Aorta (tissue), 5 donors: ENCODE measurements at regions of chr12 and their contacts with region 1.

Region 1: GRCh38 chr12:19643635-19644034 is 204.3 kb downstream of the AEBP2 start:
- DNase-seq: no peak
- ATAC-seq: no peak
- H3K4me3 ChIP-seq: no peak overlapping the region
- H3K27ac ChIP-seq: no peak overlapping the region
- H3K4me1 ChIP-seq: peaks cover 0 to 2% of the 10 kb centered on the region in 2 donors
- H3K27me3 ChIP-seq: no peaks in the 10 kb centered on the region

Region 2: GRCh38 chr12:19186722-19187661 is 456.6 kb before region 1 on chr12:
- intact Hi-C with region 1: loop called (anchors 5 to 10 kb)
- DNase-seq: no peak
- ATAC-seq: peak; percentile 65
- H3K4me3 ChIP-seq: no peak overlapping the region
- H3K27ac ChIP-seq: no peak overlapping the region
- H3K4me1 ChIP-seq: peaks cover 10 to 11% of the 10 kb centered on the region in 2 donors
- H3K27me3 ChIP-seq: no peaks in the 10 kb centered on the region

Region 3: GRCh38 chr12:19299765-19300164 is 343.9 kb before region 1 on chr12:
- intact Hi-C with region 1: loop called in 1 of 2 experiments (anchors 10 kb)
- DNase-seq: no peak
- ATAC-seq: no peak
- H3K4me3 ChIP-seq: no peak overlapping the region
- H3K27ac ChIP-seq: no peak overlapping the region
- H3K4me1 ChIP-seq: no peaks in the 10 kb centered on the region
- H3K27me3 ChIP-seq: no peaks in the 10 kb centered on the region

Region 4: DNA sequence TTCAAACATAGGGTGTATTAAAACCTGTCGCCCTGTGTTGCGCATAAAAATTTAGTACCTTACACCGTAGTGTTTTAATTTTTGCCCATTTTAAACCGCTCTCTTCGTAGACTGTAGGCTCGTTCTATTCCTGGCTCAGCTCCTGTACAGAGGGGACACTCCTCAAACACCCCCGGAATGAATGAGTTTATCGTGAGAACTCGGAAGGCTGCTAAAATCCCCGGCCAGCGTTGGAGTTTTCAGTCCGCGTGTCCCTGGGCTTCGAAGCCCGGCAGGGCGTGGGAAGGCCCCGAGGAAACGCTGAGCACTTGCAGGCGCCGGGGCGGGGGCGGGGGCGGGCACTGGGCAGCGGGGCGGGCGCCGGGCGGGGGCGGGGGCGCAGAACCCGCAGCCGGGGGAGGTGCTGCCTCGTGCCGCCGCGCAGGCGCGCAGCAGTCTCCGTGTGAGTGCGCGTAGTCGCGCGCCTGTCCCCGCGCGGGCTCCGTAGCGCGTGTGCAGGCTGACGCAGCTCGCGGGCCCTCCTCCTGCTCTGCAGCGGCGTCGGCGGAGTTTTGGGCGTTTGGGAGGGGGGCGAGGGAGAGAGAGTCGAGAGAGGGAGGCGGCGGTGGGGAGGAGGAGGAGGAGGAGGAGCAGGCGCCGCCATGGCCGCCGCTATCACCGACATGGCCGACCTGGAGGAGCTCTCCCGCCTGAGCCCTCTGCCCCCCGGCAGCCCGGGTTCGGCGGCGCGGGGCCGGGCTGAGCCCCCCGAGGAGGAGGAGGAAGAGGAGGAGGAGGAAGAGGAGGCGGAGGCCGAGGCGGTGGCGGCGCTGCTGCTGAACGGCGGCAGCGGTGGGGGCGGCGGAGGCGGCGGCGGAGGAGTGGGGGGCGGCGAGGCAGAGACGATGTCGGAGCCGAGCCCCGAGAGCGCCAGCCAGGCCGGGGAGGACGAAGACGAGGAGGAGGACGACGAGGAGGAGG is 204.3 kb before region 1 on chr12 and contains the start of gene AEBP2:
- intact Hi-C with region 1: loop called (anchors 10 kb)
- DNase-seq: peak; percentile 97 to 98
- ATAC-seq: peak; percentile 96
- H3K4me3 ChIP-seq: peak within 1 kb of the TSS; percentile 43 to 85
- H3K27ac ChIP-seq: peak within 1 kb of the TSS; percentile 79 to 93
- H3K4me1 ChIP-seq: no peaks in the 10 kb centered on the region
- H3K27me3 ChIP-seq: no peaks in the 10 kb centered on the region
- total RNA-seq, gene AEBP2: 74.3 to 89.0 TPM

Region 5: DNA sequence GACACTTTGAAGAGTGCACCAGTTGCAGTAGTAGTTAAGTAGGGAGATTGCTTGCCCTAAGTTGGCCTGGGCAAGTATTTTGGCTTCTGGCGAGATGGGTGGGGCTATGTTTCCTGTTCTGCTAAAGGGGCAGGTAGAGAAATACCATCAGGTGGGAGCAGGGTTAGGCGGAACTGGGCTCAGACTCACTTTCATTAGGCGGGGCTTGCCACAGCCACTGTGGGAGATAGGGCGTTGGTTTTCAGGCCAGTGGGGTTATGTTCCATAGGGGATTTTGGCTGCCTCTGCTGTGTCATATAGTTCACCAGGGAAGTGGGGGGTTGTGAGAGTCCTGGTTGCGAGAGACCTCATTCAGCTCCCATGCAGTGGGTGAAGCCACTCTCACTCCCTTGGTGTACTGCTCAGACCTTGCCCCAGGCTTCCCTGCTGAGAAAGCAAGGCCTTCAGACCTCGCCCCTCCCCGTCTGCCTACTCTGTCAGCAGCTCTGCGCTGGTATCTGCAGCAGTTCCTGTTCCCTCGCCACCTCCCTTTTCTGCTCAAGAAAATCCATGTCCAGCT is 161.0 kb before region 1 on chr12:
- intact Hi-C with region 1: no loop called
- DNase-seq: peak in 1 of 2 donors; percentile 67
- ATAC-seq: peak; percentile 69
- H3K4me3 ChIP-seq: no peak overlapping the region
- H3K27ac ChIP-seq: peak overlapping the region in 1 of 2 donors; percentile 23
- H3K4me1 ChIP-seq: peaks cover 2 to 10% of the 10 kb centered on the region in 2 donors
- H3K27me3 ChIP-seq: no peaks in the 10 kb centered on the region

Region 6: DNA sequence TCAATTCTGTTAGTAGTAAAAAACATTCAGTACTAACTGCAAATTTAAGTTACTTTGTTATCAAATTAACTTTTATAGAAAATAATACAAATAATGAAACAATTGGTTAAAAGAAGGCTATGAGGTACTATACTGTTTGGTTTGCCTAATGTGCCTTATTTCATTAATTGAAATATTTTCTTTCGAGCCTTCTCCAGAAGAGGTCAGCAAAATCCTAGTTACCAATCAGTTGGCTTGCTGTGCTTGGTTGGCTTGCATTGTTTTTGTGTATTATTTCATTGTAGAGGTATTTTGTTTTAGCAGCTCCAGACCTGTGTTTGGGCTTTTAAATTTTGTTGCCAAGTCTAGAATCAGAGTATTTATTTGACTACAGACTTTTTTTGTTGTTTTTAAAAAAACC is 135.8 kb before region 1 on chr12:
- intact Hi-C with region 1: loop called (anchors 5 kb)
- DNase-seq: no peak
- ATAC-seq: peak; percentile 65
- H3K4me3 ChIP-seq: no peak overlapping the region
- H3K27ac ChIP-seq: no peak overlapping the region
- H3K4me1 ChIP-seq: peaks cover 5 to 6% of the 10 kb centered on the region in 2 donors
- H3K27me3 ChIP-seq: no peaks in the 10 kb centered on the region

Region 7: DNA sequence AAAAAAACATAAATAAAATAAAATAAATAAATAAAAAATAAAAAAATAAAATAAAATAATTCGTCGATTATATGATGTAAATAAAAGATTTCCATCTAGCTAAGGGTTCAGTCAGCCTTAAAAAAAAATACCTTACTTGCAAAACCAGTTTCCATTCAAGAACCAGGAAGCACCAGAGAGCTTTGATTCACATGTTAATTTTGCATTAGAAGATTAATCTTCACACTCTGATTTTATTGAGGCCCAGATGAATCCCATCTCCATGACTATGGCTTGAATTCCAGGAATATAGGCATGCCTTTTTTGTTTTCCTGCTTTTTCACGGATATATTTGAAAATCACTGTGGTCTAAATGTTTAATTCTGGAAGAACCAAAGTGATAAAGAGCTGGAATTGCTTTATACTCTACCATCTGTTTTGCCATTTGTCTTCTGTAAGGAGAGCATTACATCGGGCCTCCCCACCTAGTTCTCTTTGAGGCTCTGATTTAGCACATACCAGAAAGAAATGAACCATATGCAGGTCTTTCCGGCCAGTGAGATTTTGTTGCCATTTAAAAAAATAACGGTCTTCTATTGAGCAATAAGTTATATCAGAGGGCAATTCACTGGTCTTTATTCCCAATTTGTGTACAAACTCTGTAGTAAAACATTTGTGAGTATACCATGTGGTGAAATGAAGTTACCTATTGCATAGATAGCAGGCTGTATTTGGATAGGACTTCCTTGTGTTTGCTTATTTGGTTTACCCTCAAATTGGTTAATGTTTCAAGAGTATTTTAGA is 28.8 kb before region 1 on chr12:
- intact Hi-C with region 1: no loop called
- DNase-seq: no peak
- ATAC-seq: no peak
- H3K4me3 ChIP-seq: no peak overlapping the region
- H3K27ac ChIP-seq: no peak overlapping the region
- H3K4me1 ChIP-seq: no peaks in the 10 kb centered on the region
- H3K27me3 ChIP-seq: no peaks in the 10 kb centered on the region